ENCODE measurements at regions of chr5 and their contacts with region 1.

Region 1: DNA sequence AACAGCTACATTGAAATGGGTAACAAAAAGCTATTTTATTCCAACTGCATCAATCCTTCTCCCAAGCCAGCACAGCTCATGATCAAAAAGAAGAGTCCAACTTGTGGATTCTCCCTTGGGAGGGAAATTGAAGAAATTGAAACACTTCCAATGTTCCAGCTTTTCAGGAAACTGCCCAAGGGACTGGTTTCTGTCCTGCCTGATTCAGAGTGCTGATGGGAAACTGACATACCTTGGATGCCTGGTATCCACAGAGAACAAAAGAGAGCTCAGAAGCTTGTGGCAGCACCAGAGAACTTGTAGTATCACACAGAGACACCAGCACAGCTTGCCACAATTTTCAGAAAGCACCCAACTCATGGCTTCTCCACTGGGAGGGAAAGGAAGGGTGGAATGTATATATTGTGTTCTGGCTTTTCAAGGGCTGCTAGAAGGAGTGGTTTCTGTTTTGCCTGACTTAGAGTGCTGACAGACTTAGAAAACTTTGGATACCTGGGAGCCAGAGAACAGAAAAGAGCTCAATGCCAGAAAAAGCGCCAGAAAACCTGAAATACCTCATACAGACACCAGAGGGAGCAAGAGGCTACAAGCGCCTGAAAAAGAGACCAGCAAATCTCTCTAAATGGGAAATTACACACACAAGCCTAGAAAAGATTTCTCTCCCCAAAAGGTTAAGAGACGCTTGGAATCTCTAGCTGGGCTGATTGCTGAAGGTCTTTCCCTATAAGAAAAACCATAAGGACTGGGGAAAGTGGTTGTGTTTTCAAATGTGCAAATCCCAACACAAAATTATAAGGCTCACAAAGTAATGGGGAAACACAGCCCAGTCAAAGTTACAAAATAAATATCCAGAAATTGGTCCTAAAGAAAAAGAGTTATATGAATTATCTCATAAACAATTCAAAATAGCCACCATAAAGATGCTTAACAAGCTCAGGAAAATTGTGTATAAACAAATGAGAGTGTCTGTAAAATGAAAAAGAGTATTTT is 178.8 kb downstream of the SPOCK1 start:
- DNase-seq: peak; percentile 78
- H3K4me3 Mint-ChIP-seq: no peak overlapping the region
- H3K27ac Mint-ChIP-seq: peak overlapping the region; percentile 32
- H3K4me1 Mint-ChIP-seq: peaks cover 11% of the 10 kb centered on the region
- H3K27me3 Mint-ChIP-seq: no peaks in the 10 kb centered on the region
- CTCF ChIP-seq: peak; percentile 93

Region 2: DNA sequence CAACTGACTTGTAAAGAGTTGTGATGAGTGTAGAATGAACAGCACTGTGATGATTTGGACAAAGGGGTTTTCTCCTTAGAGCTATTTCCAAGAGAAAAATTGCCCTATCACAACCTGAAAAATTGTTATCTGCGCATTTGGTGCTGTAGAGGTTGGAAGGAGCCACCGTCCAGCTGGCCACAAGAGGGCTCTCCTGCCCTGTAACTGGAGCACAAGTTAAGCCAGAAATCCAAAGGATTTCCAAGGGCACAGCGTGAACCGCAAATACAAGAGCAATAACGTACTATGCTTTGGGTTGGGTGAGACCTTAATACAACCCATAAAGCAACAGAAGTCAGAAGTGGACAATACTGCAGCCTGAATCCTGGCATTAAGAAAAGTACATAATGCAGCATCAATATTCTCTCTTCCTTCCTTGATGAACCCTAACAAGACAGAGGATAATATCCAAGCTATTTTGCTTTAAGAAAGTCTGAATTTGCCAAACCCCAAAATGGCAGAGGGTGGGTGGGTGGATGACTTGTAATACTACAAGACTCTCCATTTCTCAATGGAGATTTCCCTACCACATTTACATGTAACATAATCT is 1070.6 kb before region 1 on chr5:
- CTCF ChIA-PET with region 1: interaction called, 22 read pairs
- POLR2A ChIA-PET with region 1: no interaction called
- intact Hi-C with region 1: no loop called
- DNase-seq: peak; percentile 75
- H3K4me3 Mint-ChIP-seq: no peak overlapping the region
- H3K27ac Mint-ChIP-seq: no peak overlapping the region
- H3K4me1 Mint-ChIP-seq: peaks cover 11% of the 10 kb centered on the region
- H3K27me3 Mint-ChIP-seq: peaks cover 41% of the 10 kb centered on the region
- CTCF ChIP-seq: peak; percentile 99

Region 3: DNA sequence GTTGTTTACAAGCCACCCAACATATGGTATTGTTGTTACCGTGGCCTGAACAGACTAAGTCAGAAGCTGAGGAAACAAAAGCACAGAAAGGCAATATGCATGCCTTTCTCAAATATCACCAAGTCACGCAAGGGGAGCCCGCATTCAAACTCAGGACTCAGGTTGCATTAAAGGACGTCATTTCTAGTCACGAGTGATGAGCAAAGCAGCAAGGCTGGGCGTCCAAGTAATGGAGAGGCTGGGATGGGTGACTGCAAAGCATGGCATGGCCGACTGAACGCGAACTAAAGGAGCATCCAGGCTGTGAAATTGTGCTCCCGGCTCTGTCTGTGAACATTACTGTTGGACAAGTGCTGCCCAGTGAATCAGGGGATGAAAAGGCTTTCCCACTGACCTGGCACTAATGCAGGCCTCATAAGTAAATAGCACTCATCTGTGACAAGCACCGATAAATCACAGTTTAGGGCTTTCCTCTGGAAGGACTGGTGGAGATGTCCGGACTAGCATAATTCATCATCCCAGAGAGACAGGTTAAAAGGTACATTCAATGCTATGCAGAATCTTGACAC is 24.1 kb before region 1 on chr5:
- CTCF ChIA-PET with region 1: interaction called, 10 read pairs
- POLR2A ChIA-PET with region 1: no interaction called
- intact Hi-C with region 1: no loop called
- DNase-seq: no peak
- H3K4me3 Mint-ChIP-seq: no peak overlapping the region
- H3K27ac Mint-ChIP-seq: no peak overlapping the region
- H3K4me1 Mint-ChIP-seq: peaks cover 16% of the 10 kb centered on the region
- H3K27me3 Mint-ChIP-seq: no peaks in the 10 kb centered on the region
- CTCF ChIP-seq: no peak

Region 4: DNA sequence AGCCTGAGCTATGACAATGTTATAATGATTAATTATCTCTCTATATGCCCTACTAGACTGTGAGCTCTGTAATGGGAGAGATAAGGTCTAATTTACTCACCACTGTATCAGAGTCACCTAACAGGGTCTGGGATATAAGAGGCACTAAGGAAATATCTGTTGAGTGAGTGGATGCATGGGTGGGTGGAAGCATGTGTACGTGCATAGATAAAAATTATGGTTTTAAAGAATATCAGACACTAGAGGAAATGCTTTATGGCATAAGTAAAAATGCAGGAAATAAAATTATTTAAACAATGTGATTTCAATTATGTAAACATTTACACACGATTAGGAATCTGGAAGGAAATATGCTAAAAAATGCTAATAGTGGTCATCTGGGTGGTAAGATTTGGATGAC is 40.9 kb after region 1 on chr5:
- CTCF ChIA-PET with region 1: interaction called, 12 read pairs
- POLR2A ChIA-PET with region 1: interaction called, 3 read pairs
- intact Hi-C with region 1: no loop called
- DNase-seq: no peak
- H3K4me3 Mint-ChIP-seq: no peak overlapping the region
- H3K27ac Mint-ChIP-seq: no peak overlapping the region
- H3K4me1 Mint-ChIP-seq: no peaks in the 10 kb centered on the region
- H3K27me3 Mint-ChIP-seq: no peaks in the 10 kb centered on the region
- CTCF ChIP-seq: no peak

Region 5: GRCh38 chr5:137453485-137454080 is 133.2 kb after region 1 on chr5:
- CTCF ChIA-PET with region 1: interaction called, 11 read pairs
- POLR2A ChIA-PET with region 1: no interaction called
- intact Hi-C with region 1: no loop called
- DNase-seq: peak; percentile 86
- H3K4me3 Mint-ChIP-seq: no peak overlapping the region
- H3K27ac Mint-ChIP-seq: no peak overlapping the region
- H3K4me1 Mint-ChIP-seq: no peaks in the 10 kb centered on the region
- H3K27me3 Mint-ChIP-seq: no peaks in the 10 kb centered on the region
- CTCF ChIP-seq: no peak

Region 6: GRCh38 chr5:137510671-137511070 is 190.3 kb after region 1 on chr5:
- CTCF ChIA-PET with region 1: interaction called, 76 read pairs
- POLR2A ChIA-PET with region 1: no interaction called
- intact Hi-C with region 1: no loop called
- DNase-seq: no peak
- H3K4me3 Mint-ChIP-seq: no peak overlapping the region
- H3K27ac Mint-ChIP-seq: no peak overlapping the region
- H3K4me1 Mint-ChIP-seq: no peaks in the 10 kb centered on the region
- H3K27me3 Mint-ChIP-seq: peaks cover 13% of the 10 kb centered on the region
- CTCF ChIP-seq: no peak

Region 7: DNA sequence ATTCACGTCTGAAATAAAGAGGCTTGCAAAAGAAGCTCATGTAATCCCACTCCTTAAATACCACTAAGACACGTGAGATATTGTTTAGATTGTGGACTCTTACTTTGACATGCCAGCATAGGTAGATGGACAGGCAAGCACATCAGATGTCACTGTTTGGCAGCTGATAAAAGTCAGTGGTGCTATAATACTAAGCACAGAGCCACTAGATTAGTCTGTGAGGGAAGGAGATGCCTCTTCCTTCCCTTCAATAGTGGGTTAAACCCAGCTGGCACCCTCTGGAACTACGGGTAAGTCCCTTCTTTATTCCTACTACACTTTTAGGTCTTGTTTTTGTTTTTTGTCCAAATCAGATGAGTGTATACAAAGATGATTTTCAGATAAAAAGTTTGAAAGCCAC is 547.3 kb after region 1 on chr5 and contains the start of gene MYOT:
- CTCF ChIA-PET with region 1: no interaction called
- POLR2A ChIA-PET with region 1: no interaction called
- intact Hi-C with region 1: no loop called
- DNase-seq: no peak
- H3K4me3 Mint-ChIP-seq: no peak within 1 kb of the TSS
- H3K27ac Mint-ChIP-seq: no peak within 1 kb of the TSS
- H3K4me1 Mint-ChIP-seq: no peaks in the 10 kb centered on the region
- H3K27me3 Mint-ChIP-seq: no peaks in the 10 kb centered on the region
- CTCF ChIP-seq: no peak
- total RNA-seq, gene MYOT: not detected in 2 replicates